ENCODE measurements at regions of chr11 and their contacts with region 1.

Region 1: DNA sequence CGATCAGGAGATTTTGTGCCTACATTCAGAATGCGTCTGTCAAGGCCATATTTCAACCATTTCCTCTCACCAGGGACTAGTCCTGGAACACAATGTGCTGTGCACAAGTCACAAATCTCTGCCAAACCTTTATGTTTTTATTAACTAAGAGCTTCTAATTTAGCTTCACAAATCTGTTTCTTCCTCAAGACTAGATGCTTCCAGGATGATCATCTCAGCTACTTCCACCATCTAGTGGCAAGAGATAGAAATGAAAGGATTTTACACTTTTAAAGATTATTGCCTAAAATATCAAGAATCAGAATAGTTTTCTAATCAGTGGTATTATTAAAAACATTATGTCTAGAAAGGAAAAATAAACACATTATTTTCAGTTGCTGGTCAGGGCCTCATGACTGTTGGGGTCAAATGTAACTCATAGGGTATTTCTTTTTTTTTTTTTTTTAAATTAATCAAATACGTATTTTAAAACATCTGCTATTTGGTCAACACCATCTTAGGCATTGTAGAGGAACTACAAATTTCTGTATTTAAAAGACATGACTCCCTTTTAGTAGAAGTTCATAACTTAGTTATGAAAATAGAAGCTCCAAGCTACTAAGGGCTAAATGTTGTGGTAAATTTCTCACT is 1102.6 kb downstream of the DLG2 start:
- DNase-seq: peak; percentile 57
- ATAC-seq: no peak
- H3K4me3 ChIP-seq: no peak overlapping the region
- H3K27ac ChIP-seq: no peak overlapping the region
- H3K4me1 ChIP-seq: no peaks in the 10 kb centered on the region
- H3K27me3 ChIP-seq: peaks cover 31% of the 10 kb centered on the region
- CTCF ChIP-seq: peak; percentile 72

Region 2: GRCh38 chr11:84384731-84385130 is 139.8 kb before region 1 on chr11:
- CTCF ChIA-PET with region 1: no interaction called
- POLR2A ChIA-PET with region 1: no interaction called
- intact Hi-C with region 1: loop called (anchors 2 kb)
- DNase-seq: peak; percentile 73
- ATAC-seq: no peak
- H3K4me3 ChIP-seq: no peak overlapping the region
- H3K27ac ChIP-seq: no peak overlapping the region
- H3K4me1 ChIP-seq: no peaks in the 10 kb centered on the region
- H3K27me3 ChIP-seq: no peaks in the 10 kb centered on the region
- CTCF ChIP-seq: peak; percentile 85

Region 3: DNA sequence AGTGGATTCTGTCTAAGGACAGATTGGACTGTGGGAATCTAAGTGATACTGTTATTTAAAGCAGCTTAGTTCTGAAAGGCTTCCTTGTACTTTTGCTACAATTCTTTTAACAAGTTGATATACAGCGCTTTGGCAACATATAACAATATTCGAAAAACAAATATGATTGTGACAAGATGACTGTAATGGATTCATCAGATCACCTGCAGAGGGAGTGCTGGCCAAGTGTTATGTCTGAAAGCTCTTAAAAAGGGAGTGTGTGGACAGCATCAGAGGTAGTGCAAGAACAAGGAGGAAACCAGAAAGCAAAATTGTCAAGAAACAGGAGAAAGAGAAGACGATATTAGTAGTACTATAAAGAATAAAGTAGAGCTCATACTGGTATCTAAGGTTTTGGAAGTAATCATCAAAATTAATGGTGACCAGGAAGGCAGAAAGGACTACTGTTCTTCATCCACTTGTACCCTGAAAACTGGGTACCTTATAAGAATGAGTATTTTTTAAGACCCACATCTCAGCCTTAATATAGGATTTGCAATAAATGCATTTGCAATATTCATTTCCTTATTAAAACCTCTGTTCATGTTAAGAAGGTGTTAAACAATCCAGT is 126.4 kb before region 1 on chr11:
- CTCF ChIA-PET with region 1: no interaction called
- POLR2A ChIA-PET with region 1: no interaction called
- intact Hi-C with region 1: loop called (anchors 5 kb)
- DNase-seq: peak; percentile 52
- ATAC-seq: peak; percentile 49; the same call in 1 of the 2 replicates
- H3K4me3 ChIP-seq: no peak overlapping the region
- H3K27ac ChIP-seq: no peak overlapping the region
- H3K4me1 ChIP-seq: no peaks in the 10 kb centered on the region
- H3K27me3 ChIP-seq: peaks cover 4% of the 10 kb centered on the region; the same call in 1 of the 2 replicates
- CTCF ChIP-seq: peak; percentile 66

Measured in PC-3 (cell line).